Right ventricle myocardium inferior (tissue), 1 donor: ENCODE measurements at regions of chr5 and their contacts with region 1.

Region 1: GRCh38 chr5:16456103-16456832 is 9.3 kb downstream of the ZNF622 start:
- DNase-seq: no peak
- ATAC-seq: peak; percentile 21

Region 2: DNA sequence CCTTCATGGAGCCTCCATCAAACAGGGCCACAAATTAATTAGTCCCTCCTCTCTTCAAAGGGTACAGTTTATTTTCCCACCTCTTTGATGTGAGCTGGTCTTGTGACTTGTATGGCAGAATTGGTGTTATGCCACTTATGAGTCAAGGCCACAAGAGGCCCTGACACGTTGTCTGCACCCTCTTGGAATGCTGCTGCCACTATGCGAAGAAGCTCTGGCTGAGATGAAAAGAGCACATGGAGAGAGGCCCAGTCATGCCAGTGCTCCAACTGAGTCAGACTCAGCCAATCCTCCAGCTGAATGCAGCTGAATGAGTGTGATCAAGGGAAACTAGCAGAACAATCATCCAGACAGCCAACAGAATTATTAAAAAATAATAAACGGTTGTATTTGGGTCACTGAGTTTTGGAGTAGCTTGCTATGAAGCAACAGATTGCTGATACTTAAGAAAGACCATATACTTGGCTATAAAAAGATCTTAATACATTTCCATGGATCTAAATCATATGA is 405.0 kb before region 1 on chr5:
- intact Hi-C with region 1: no loop called
- DNase-seq: no peak
- ATAC-seq: peak; percentile 44

Region 3: DNA sequence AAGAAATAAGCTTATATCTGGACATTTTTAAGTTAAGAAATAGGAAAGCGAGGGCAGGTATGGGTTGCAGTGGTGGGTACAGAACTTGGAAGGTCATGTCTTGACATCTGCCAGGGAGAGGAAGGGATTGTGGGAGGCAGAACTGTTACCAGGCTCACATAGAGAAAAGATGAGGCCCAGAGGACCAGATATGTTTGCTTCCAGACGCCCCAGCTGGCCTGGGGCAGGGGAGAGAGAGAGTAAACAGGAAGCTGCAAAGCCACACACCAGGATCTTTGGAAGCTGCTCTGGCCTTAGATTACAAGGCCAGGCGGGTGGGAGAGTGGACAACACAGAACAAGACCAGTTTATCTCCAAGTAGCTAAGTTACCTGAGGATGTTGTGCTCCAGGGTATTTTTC is 347.9 kb before region 1 on chr5:
- intact Hi-C with region 1: no loop called
- DNase-seq: no peak
- ATAC-seq: no peak

Region 4: DNA sequence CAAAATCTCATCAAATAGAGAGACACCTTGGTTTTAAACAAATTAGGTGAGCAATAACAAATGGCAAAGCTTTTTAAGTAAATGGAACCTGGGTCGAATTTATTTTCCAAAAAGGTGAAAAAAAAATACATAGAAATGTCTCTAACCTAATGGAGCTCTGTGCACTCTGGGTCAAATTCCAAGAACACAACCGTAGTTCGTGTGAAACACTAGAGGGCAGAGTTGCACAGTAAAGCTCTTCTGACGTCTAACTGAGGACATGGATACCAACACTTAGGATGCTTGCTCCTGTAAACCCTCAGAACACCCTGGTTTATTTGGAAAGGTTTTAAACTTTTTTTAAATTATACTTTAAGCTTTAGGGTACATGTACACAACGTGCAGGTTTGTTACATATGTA is 295.6 kb before region 1 on chr5:
- intact Hi-C with region 1: loop called (anchors 2 kb)
- DNase-seq: no peak
- ATAC-seq: peak; percentile 65

Region 5: GRCh38 chr5:16326137-16326536 is 130.1 kb before region 1 on chr5:
- intact Hi-C with region 1: loop called (anchors 5 kb)
- DNase-seq: no peak
- ATAC-seq: no peak

Region 6: GRCh38 chr5:16418471-16418922 is 37.8 kb before region 1 on chr5:
- intact Hi-C with region 1: loop called (anchors 2 kb)
- DNase-seq: no peak
- ATAC-seq: peak; percentile 96